Cardiac septum (tissue), 1 donor: ENCODE measurements at regions of chr2 and their contacts with region 1.

Region 1: DNA sequence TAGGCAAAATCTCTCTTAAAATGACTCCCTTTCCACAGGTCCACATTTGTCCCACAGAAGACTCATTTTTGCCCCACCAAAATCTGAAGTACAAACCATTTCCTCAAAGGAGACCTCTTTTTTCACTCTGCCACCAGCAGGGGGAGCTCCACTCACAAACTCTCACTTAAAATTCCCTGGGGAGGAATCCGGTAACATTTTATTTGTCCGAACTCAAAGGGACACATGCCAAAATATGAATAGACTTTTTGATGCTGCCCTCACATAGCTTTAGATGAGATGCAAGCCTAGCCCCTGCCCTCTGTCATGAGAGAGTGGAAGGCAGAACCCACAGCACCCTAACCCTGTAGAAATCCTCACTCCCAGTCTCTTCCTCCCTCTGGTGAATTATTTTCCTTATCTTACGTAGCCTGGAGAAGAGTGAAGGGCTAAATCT is 57.1 kb downstream of the RMDN2 start:
- DNase-seq: no peak

Region 2: GRCh38 chr2:37832590-37833197 is 149.5 kb before region 1 on chr2:
- intact Hi-C with region 1: no loop called
- DNase-seq: peak; percentile 91

Region 3: GRCh38 chr2:37843556-37843955 is 138.6 kb before region 1 on chr2:
- intact Hi-C with region 1: no loop called
- DNase-seq: no peak

Region 4: GRCh38 chr2:37880551-37880950 is 101.6 kb before region 1 on chr2:
- intact Hi-C with region 1: no loop called
- DNase-seq: no peak

Region 5: DNA sequence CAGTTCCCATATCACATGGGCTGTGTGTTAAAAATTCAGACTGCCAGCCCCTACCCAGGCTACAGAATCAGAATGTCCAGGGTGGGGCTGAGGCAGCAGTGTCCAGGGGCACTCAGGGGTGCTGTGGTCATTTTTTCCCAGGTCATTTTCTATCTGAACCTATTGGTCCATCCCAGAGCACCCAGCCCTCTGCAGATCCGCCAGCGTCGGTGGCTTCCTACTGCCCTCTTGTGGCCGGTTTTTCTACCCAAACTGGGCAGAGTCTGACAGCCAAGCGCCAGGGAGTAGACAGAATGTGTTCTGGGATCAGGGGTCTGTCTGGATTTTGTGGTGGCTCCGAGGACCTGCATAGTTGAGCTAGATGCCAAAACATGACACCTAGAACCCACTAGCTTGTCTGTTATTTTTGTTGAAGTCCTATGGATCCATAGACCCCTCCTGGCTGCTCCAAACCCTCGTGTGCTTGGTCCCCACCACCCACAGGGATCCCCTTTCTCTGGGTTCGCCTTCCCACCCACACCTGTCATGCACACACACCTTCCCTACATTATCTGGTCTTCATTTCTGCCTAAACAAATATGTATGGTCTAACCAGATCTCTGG is 91.2 kb before region 1 on chr2:
- intact Hi-C with region 1: no loop called
- DNase-seq: peak; percentile 88

Region 6: DNA sequence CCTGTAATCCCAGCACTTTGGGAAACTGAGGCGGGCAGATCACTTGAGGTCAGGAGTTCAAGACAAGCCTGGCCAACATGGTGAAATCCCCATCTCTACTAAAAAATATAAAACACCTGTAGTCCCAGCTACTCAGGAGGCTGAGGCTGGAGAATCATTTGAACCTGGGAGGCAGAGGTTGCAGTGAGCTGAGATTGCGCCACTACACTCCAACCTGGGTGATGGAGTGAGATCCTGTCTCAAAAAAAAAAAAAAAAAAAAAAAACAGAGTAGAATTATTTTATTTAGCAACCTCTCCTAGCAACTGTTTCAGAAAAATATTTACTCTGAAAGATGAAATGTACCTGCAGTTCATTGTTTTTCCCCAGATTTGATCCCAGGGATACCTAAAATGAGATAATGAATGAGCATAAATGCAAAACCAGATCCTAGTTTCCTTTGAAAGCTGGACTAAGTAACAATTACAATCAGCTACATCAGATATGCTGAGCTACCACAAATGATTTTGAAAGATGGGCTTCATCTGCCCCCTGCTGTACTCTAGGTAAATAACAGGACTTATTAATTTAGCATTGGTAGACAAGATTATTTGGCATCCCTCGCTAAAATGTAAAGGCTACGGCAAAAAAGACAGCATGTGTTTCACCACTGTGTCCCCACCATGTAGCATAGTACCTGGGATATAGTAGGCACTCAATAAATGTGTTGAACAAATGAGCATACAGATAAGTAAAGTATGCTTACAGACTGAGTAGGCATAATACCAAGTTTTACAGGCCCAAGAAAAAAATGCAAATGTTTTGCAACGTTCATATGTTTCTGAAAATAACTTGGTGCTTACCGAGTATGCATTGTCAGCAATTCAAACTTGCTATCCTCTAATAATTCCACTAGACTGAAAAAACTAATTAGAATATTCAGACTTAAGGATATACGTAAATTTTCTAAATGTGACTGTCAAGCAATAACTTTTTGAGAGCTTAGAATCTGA is 292.4 kb after region 1 on chr2:
- intact Hi-C with region 1: loop called (anchors 2 kb)
- DNase-seq: no peak